ENCODE measurements at regions of chr3 and their contacts with region 1.

Region 1: DNA sequence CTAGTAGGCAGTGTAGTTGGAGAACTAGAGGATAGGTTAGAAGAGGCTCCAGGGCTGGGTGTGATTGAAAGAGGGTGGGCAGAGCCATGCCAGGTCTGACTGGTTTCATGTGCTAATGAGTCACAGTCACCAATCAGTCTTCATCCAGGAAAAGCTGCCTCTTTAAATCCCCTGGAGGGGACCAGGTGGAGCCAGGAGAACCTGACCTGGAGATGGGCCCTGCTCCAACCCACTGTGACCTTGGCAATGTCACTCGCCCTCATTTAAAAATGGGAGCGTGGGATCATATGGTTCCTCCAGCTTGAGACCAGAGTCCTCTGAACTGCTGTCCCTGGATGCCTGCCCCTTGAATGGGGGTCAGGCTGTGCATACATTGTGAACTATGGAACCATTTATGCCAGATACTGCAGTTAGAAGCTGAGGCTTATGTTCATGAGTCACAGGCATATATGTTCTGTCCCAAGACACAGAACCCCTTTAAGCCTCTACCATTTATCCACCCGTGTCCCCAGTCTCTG is 23.0 kb downstream of the HES1 start:
- DNase-seq: no peak
- ATAC-seq: peak in 1 of 4 donors; percentile 75
- H3K4me3 ChIP-seq: no peak overlapping the region
- H3K27ac ChIP-seq: no peak overlapping the region
- H3K4me1 ChIP-seq: no peaks in the 10 kb centered on the region
- H3K27me3 ChIP-seq: no peaks in the 10 kb centered on the region
- CTCF ChIP-seq: no peak
- POLR2A ChIP-seq: no peak

Region 2: DNA sequence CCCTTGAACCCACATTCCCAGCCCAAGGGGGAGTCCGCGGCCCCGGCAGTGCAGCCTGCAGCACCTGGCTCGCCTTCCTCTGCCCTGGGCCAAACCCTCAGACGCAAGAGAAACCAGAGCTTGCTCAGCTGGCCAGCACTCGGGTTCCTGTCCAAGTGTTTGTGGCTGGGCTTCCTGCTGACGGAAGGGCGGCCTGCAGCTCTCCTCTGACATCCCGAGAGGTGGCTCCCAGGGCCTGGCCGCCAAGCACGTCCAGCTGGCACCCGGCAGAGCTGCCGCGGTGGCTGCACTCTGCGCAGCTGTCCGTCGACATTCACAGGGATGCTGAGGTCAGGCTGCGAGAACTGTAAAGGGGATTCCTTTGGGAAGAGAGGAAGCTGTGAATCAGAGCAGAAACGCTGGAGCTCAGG is 106.5 kb after region 1 on chr3:
- intact Hi-C with region 1: loop called in 1 of 2 experiments (anchors 10 kb)
- DNase-seq: peak; percentile 92 to 93 (median 93)
- ATAC-seq: peak; percentile 67 to 77 (median 72)
- H3K4me3 ChIP-seq: no peak overlapping the region
- H3K27ac ChIP-seq: peak overlapping the region; percentile 24 to 75 (median 63)
- H3K4me1 ChIP-seq: peaks cover 0 to 48% (median 20%) of the 10 kb centered on the region in 4 donors
- H3K27me3 ChIP-seq: no peaks in the 10 kb centered on the region
- CTCF ChIP-seq: no peak
- POLR2A ChIP-seq: no peak

Region 3: GRCh38 chr3:194296454-194297263 is 137.7 kb after region 1 on chr3:
- intact Hi-C with region 1: no loop called
- DNase-seq: peak; percentile 66 to 72 (median 68)
- ATAC-seq: peak; percentile 78 to 85 (median 82)
- H3K4me3 ChIP-seq: peak overlapping the region; percentile 31 to 51 (median 48)
- H3K27ac ChIP-seq: peak overlapping the region; percentile 28 to 74 (median 44)
- H3K4me1 ChIP-seq: peaks cover 0 to 14% (median 0%) of the 10 kb centered on the region in 4 donors
- H3K27me3 ChIP-seq: no peaks in the 10 kb centered on the region
- CTCF ChIP-seq: no peak
- POLR2A ChIP-seq: no peak

Measured in right lobe of liver (tissue), 6 donors.